ENCODE measurements at regions of chr14 and their contacts with region 1.

Region 1: DNA sequence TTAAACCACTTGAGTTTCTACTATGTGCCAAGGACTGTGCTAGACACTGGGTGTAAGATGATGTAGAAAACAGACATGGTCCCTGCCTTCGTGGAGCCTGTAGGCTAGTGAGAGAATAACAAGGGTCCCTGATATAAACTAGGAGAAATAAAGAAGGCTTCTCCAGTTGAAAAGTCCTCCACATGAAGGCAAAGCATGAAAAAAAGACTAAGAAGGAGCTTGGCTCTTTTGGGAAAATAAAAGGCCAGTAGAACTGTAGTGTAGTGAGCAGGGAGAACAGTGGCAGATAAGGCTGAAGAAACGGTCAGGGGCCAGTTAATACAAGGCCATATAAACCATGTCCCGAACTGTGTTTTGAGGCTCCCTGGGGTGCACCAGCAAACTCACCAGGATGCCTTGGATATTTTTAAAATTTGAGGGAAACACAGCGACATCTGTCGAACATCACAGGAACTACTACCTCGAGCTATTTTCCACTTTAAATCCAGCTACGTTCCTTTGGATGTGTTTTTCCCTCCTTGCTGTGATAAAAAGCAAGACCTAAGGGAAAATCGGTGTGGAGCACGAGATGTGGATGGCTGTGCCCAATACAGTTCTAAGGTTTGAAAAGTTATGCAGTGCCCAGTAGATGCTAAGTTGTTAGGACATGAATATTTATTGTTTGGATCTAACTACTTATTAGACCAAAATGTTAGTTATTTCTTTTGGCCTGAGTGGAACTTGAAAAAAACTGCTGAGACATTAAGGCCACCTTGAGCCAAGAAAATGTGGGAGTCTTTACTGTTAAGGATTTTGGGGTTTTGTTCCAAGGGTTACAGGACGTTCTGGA is 8.5 kb upstream of the CFL2 start:
- DNase-seq: peak in 10 of 14 experiments; percentile 4 to 73 (median 23)
- ATAC-seq: peak; percentile 60
- H3K4me3 ChIP-seq: no peak overlapping the region
- H3K4me3 Mint-ChIP-seq: no peak overlapping the region
- H3K27ac ChIP-seq: no peak overlapping the region
- H3K27ac Mint-ChIP-seq: no peak overlapping the region
- H3K4me1 ChIP-seq: peaks cover 3% of the 10 kb centered on the region
- H3K4me1 Mint-ChIP-seq: peaks cover 6% of the 10 kb centered on the region
- H3K27me3 ChIP-seq: no peaks in the 10 kb centered on the region
- H3K27me3 Mint-ChIP-seq: no peaks in the 10 kb centered on the region
- CTCF ChIP-seq: peak; percentile 96

Region 2: GRCh38 chr14:34331728-34332623 is 391.0 kb before region 1 on chr14:
- CTCF ChIA-PET with region 1: no interaction called
- POLR2A ChIA-PET with region 1: no interaction called
- intact Hi-C with region 1: loop called (anchors 5 to 10 kb)
- DNase-seq: peak; percentile 17 to 72 (median 46)
- ATAC-seq: peak; percentile 64
- H3K4me3 ChIP-seq: no peak overlapping the region
- H3K4me3 Mint-ChIP-seq: no peak overlapping the region
- H3K27ac ChIP-seq: no peak overlapping the region
- H3K27ac Mint-ChIP-seq: no peak overlapping the region
- H3K4me1 ChIP-seq: peaks cover 7% of the 10 kb centered on the region
- H3K4me1 Mint-ChIP-seq: peaks cover 11% of the 10 kb centered on the region
- H3K27me3 ChIP-seq: no peaks in the 10 kb centered on the region
- H3K27me3 Mint-ChIP-seq: no peaks in the 10 kb centered on the region
- CTCF ChIP-seq: peak; percentile 85

Region 3: DNA sequence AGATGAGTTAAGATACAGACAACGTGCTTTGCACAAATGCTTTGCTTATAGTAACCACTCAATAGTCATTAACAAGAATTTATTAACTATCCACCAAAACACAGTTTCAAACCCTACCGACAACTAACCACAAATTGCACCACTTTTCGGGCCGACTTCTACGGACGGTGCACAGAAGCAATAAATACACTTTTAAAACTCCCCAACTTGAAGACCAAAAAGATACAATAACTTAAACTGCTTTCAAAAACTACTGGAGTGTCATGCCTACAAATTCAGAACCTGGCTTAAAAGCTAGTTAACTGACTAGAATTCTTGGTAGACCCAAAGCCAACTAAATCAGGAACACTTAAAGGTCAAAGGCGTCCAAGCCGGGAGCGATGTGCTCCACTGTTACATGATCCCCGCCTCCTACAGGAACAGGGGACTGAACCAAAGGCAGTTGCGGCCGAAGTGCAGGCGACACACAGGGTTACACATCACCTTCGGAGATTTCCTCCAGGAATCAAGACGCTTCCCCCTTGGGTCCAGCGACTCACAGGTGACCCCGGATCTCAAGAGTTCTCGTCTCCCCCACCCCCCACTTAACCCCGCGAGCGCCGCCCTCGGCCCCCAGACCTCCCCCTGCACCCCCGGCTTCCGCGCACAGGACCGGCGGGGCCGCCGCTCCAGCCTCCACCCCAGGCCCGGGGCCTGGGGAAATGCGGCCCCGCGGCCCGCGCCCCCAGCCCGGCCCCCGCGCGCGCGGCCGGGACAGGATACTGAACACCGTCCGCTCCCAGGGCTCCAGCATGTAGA is 261.4 kb before region 1 on chr14:
- CTCF ChIA-PET with region 1: no interaction called
- POLR2A ChIA-PET with region 1: no interaction called
- intact Hi-C with region 1: loop called in 1 of 2 experiments (anchors 10 kb)
- DNase-seq: peak in 6 of 14 experiments; percentile 4 to 48 (median 20)
- ATAC-seq: no peak
- H3K4me3 ChIP-seq: peak overlapping the region; percentile 78
- H3K4me3 Mint-ChIP-seq: peak overlapping the region; percentile 87
- H3K27ac ChIP-seq: no peak overlapping the region
- H3K27ac Mint-ChIP-seq: peak overlapping the region; percentile 50
- H3K4me1 ChIP-seq: peaks cover 12% of the 10 kb centered on the region
- H3K4me1 Mint-ChIP-seq: peaks cover 15% of the 10 kb centered on the region
- H3K27me3 ChIP-seq: no peaks in the 10 kb centered on the region
- H3K27me3 Mint-ChIP-seq: no peaks in the 10 kb centered on the region
- CTCF ChIP-seq: no peak

Region 4: DNA sequence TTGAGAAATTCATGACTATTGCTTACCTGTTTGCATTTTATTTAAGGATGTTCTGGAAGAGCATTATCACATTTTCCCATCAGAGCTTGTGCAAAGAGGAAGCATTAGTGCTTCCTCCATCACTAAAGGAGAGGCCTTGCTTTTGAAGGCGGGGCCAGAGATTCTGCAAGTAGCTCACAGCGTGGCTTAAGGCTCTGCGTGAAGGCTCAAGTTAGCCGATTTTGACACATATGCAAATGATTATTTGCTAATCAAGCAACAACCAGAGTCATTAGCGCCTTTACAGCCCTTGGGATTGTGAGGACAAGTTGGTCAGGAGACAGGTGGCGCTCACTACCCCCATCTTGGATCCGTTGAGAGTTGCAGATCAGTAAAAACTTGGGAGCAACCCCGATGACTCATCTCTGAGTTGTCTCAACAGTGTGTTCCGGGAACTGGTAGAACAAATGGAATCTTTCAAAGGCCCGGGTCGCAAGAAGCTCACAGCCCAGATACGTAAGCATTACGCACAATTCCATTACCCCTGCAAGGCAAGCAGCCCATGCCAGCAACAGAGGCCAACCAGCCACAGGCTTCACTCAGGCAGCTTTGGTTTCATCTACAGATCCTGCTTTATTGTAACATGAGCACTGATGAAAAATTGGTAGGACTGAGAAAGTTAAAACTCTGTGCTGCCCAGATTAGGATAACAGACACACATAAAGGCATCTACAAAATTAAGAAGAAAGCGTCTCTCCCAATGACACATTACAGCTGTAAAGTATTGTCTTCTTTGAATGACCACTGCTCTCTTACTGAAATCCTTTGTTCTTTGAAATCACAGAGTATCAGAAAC is 226.0 kb before region 1 on chr14:
- CTCF ChIA-PET with region 1: no interaction called
- POLR2A ChIA-PET with region 1: no interaction called
- intact Hi-C with region 1: no loop called
- DNase-seq: peak in 1 of 14 experiments; percentile 4
- ATAC-seq: no peak
- H3K4me3 ChIP-seq: no peak overlapping the region
- H3K4me3 Mint-ChIP-seq: no peak overlapping the region
- H3K27ac ChIP-seq: no peak overlapping the region
- H3K27ac Mint-ChIP-seq: no peak overlapping the region
- H3K4me1 ChIP-seq: no peaks in the 10 kb centered on the region
- H3K4me1 Mint-ChIP-seq: no peaks in the 10 kb centered on the region
- H3K27me3 ChIP-seq: no peaks in the 10 kb centered on the region
- H3K27me3 Mint-ChIP-seq: no peaks in the 10 kb centered on the region
- CTCF ChIP-seq: no peak

Region 5: DNA sequence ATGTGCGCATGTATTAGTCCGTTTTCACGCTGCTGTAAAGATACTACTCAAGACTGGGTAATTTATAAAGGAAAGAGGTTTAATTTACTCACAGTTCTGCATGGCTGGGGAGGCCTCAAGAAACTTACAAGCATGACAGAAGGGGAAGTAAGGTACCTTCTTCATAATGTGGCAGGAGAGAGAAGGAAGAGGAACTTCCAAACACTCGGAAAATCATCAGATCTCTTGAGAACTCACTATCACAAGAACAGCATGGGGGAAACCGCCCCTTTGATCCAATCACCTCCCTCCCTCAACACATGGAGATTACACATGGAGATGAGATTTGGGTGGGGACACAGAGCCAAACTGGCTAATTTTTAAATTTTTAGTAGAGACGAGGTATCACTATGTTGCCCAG is 51.2 kb before region 1 on chr14:
- CTCF ChIA-PET with region 1: interaction called, 37 read pairs
- POLR2A ChIA-PET with region 1: no interaction called
- intact Hi-C with region 1: loop called (anchors 1 kb)
- DNase-seq: no peak
- ATAC-seq: no peak
- H3K4me3 ChIP-seq: no peak overlapping the region
- H3K4me3 Mint-ChIP-seq: no peak overlapping the region
- H3K27ac ChIP-seq: no peak overlapping the region
- H3K27ac Mint-ChIP-seq: no peak overlapping the region
- H3K4me1 ChIP-seq: peaks cover 5% of the 10 kb centered on the region
- H3K4me1 Mint-ChIP-seq: no peaks in the 10 kb centered on the region
- H3K27me3 ChIP-seq: no peaks in the 10 kb centered on the region
- H3K27me3 Mint-ChIP-seq: no peaks in the 10 kb centered on the region
- CTCF ChIP-seq: no peak

Region 6: DNA sequence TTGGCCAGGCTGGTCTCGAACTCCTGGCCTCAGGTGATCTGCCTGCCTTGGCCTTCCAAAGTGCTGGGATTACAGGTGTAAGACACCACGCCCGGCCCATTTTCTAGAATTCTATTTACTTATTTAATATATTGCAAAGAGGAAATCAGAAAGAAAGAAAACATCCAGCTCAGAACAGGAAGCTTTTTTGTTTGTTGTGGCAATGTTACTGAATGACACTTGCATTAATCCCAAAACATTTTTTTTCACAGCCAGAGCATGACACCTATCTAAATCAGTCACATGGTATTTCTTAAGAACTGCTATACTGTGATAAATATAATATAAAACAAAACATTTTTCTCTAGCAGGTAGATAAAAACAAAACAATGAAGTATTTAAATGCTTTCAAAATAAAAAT is 21.1 kb before region 1 on chr14:
- CTCF ChIA-PET with region 1: no interaction called
- POLR2A ChIA-PET with region 1: no interaction called
- intact Hi-C with region 1: no loop called
- DNase-seq: no peak
- ATAC-seq: no peak
- H3K4me3 ChIP-seq: no peak overlapping the region
- H3K4me3 Mint-ChIP-seq: no peak overlapping the region
- H3K27ac ChIP-seq: no peak overlapping the region
- H3K27ac Mint-ChIP-seq: no peak overlapping the region
- H3K4me1 ChIP-seq: no peaks in the 10 kb centered on the region
- H3K4me1 Mint-ChIP-seq: no peaks in the 10 kb centered on the region
- H3K27me3 ChIP-seq: no peaks in the 10 kb centered on the region
- H3K27me3 Mint-ChIP-seq: no peaks in the 10 kb centered on the region
- CTCF ChIP-seq: no peak

Region 7: GRCh38 chr14:34857689-34858449 is 134.9 kb after region 1 on chr14:
- CTCF ChIA-PET with region 1: no interaction called
- POLR2A ChIA-PET with region 1: no interaction called
- intact Hi-C with region 1: no loop called
- DNase-seq: peak in 6 of 14 experiments; percentile 4 to 75 (median 35)
- ATAC-seq: peak; percentile 83
- H3K4me3 ChIP-seq: no peak overlapping the region
- H3K4me3 Mint-ChIP-seq: peak overlapping the region; percentile 9
- H3K27ac ChIP-seq: peak overlapping the region; percentile 24 to 43
- H3K27ac Mint-ChIP-seq: peak overlapping the region; percentile 55
- H3K4me1 ChIP-seq: peaks cover 18% of the 10 kb centered on the region
- H3K4me1 Mint-ChIP-seq: peaks cover 47% of the 10 kb centered on the region
- H3K27me3 ChIP-seq: no peaks in the 10 kb centered on the region
- H3K27me3 Mint-ChIP-seq: no peaks in the 10 kb centered on the region
- CTCF ChIP-seq: no peak

Region 8: GRCh38 chr14:35020713-35021112 is 297.8 kb after region 1 on chr14:
- CTCF ChIA-PET with region 1: no interaction called
- POLR2A ChIA-PET with region 1: no interaction called
- intact Hi-C with region 1: no loop called
- DNase-seq: no peak
- ATAC-seq: no peak
- H3K4me3 ChIP-seq: no peak overlapping the region
- H3K4me3 Mint-ChIP-seq: no peak overlapping the region
- H3K27ac ChIP-seq: no peak overlapping the region
- H3K27ac Mint-ChIP-seq: no peak overlapping the region
- H3K4me1 ChIP-seq: no peaks in the 10 kb centered on the region
- H3K4me1 Mint-ChIP-seq: no peaks in the 10 kb centered on the region
- H3K27me3 ChIP-seq: no peaks in the 10 kb centered on the region
- H3K27me3 Mint-ChIP-seq: no peaks in the 10 kb centered on the region
- CTCF ChIP-seq: no peak